Posterior vena cava (tissue), 2 donors: ENCODE measurements at regions of chr15 and their contacts with region 1.

Region 1: GRCh38 chr15:34914317-34914716 is 55.2 kb downstream of the AQR start:
- DNase-seq: no peak

Region 2: GRCh38 chr15:34621675-34622074 is 292.6 kb before region 1 on chr15:
- intact Hi-C with region 1: loop called in 1 of 2 experiments (anchors 5 kb)
- DNase-seq: no peak